ENCODE measurements at regions of chr3 and their contacts with region 1.

Region 1: GRCh38 chr3:172256101-172256734 is 192.0 kb downstream of the GHSR start:
- DNase-seq: no peak

Region 2: GRCh38 chr3:172057059-172057458 is 199.2 kb before region 1 on chr3:
- intact Hi-C with region 1: no loop called
- DNase-seq: no peak

Region 3: GRCh38 chr3:172201136-172201869 is 54.9 kb before region 1 on chr3:
- intact Hi-C with region 1: loop called (anchors 5 kb)
- DNase-seq: peak; percentile 90

Region 4: DNA sequence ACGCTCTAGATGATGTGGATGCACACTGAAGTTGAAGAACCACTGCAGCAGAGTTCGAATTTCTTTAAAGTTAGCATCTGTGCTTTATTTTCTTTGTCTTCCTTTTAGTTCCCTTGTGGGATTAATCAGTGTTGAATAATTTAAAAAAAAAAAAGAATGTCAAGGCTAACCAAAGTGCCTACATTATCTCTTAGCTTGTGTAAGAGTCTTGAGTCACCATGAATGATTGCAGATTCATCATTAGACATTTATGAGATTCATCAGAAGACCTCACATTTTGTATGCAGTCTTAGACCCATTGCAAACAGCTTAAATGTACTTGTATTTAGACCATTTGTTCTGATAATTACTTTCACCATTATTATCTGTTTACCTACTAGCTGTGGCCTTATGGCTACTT is 34.7 kb before region 1 on chr3:
- intact Hi-C with region 1: loop called (anchors 5 kb)
- DNase-seq: no peak

Region 5: GRCh38 chr3:172303941-172304558 is 47.8 kb after region 1 on chr3:
- intact Hi-C with region 1: loop called (anchors 5 kb)
- DNase-seq: no peak